ENCODE measurements at regions of chr3 and their contacts with region 1.

Region 1: DNA sequence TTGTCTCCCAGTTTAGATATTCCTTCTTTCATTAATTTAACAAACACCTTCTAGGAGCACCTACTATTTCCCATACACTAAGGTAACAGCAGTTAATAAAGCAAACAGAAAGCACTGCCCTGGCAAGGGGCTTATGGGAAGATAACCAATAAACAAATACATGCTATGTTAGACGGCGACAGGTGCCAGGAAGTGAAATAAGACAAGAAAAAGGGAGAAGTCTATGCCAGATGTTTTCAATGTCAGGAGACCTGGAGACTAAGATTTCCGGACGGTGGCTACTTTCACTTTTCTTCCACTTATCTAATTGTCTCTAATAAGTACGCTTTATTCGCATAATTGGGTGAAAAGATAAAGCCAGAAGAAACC is 32.5 kb upstream of the ZNF445 start:
- DNase-seq: peak in 3 of 42 donors; percentile 2 to 17 (median 9)

Region 2: GRCh38 chr3:44477312-44478030 is 32.5 kb before region 1 on chr3 and contains the start of gene ZNF445:
- intact Hi-C with region 1: loop called (anchors 2 kb)
- DNase-seq: peak; percentile 57 to 94 (median 86)

Measured in head of caudate nucleus (tissue), 42 donors.